ENCODE measurements at regions of chr13 and their contacts with region 1.

Region 1: GRCh38 chr13:108895220-108895704 is 265.9 kb downstream of the MYO16 start:
- DNase-seq: peak in 1 of 3 donors; percentile 36
- ATAC-seq: no peak
- H3K4me3 ChIP-seq: no peak overlapping the region
- H3K4me1 ChIP-seq: no peaks in the 10 kb centered on the region
- CTCF ChIP-seq: peak; percentile 10

Region 2: DNA sequence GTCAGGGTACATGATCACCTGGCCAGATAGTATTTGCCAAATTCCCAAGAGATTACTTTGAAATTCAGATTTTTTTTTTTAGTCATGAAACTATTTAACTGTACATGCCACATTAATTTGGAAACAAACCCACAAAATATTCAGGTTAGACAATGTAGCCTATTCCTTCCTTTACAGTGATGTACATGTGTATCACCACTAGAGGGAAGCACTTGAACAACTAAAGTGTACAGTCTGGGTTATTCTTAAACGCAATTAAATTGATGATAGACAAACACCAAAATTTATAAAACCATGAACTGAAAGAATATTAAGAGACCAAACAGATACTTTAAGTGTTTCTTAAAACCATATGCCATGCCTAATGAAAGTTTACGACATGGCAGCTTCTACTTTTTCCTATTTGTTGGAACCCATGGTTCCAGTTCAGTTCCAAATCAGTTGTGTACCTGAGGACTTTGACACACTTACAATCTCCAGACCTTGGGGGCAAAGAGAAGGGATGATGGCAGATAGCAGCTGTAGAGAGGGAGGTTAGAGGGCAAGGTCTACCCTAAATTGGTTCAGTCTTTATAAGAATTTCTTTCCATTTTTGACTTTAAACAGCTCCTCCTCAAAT is 572.9 kb before region 1 on chr13:
- intact Hi-C with region 1: loop called (anchors 5 to 10 kb)
- DNase-seq: no peak
- ATAC-seq: peak; percentile 80
- H3K4me3 ChIP-seq: no peak overlapping the region
- H3K4me1 ChIP-seq: no peaks in the 10 kb centered on the region
- CTCF ChIP-seq: peak; percentile 59

Region 3: DNA sequence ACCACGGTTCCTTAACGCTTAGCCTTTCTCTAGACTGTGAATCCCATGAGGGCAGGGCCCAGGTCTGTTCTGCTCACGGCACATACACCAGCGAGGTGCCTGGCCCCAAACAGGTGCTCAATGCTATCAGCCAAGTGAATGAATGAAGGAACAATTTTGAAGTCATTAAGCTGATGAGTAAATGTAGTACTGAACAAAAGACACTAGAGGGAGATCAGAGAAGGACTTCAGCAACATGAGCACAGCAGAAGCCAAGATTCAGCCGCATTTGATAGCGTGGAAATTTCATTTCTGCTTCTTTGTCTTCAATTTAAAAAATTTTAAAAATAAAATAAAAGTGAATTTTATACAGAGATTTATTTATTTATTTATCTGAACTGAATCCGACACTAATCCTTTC is 285.9 kb before region 1 on chr13:
- intact Hi-C with region 1: loop called in 1 of 2 experiments (anchors 10 kb)
- DNase-seq: no peak
- ATAC-seq: no peak
- H3K4me3 ChIP-seq: no peak overlapping the region
- H3K4me1 ChIP-seq: no peaks in the 10 kb centered on the region
- CTCF ChIP-seq: no peak

Region 4: GRCh38 chr13:109135018-109135417 is 239.8 kb after region 1 on chr13:
- intact Hi-C with region 1: no loop called
- DNase-seq: no peak
- ATAC-seq: no peak
- H3K4me3 ChIP-seq: no peak overlapping the region
- H3K4me1 ChIP-seq: no peaks in the 10 kb centered on the region
- CTCF ChIP-seq: no peak

Measured in mucosa of descending colon (tissue), 3 donors.